Activated B cell treated with CpG ODN at 0.5 μM for 24 hours (primary cell): ENCODE measurements at regions of chr6 and their contacts with region 1.

Region 1: DNA sequence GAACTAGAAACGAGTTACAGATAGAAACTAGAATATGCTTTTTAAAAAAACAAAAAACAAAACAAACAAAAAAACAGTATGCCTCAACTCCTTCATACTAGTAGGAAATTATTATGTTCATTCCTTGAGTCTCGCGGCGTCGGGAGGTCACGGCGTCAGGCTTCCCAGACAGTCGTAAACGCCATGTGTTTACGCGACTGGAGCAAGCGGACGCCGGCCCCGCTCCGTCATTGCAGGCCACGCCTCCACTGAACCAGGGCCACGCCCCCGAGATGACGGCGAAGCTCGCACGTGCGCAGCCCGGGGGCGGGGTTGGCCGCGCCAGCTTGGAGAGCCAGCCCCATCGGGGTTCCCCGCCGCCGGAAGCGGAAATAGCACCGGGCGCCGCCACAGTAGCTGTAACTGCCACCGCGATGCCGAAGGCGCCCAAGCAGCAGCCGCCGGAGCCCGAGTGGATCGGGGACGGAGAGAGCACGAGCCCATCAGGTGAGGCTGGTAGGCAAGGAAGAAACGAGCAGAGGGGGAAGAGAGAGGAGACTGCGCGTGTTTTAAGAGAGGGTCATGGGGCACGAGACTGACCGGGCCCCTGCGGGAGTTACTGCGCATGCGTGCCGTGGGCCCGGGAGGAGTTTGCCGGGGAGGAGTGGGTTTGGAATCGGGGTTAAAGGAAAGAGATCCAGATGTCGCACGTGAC is at the start of gene ABCF1:
- DNase-seq: peak; percentile 100
- ATAC-seq: peak; percentile 95
- H3K4me3 Mint-ChIP-seq: peak within 1 kb of the TSS; percentile 99
- H3K27ac Mint-ChIP-seq: peak within 1 kb of the TSS; percentile 96
- H3K4me1 Mint-ChIP-seq: peaks cover 53% of the 10 kb centered on the region
- H3K27me3 Mint-ChIP-seq: no peaks in the 10 kb centered on the region
- CTCF ChIP-seq: no peak
- total RNA-seq, gene ABCF1: 93.7 and 94.5 TPM in 2 replicates

Region 2: DNA sequence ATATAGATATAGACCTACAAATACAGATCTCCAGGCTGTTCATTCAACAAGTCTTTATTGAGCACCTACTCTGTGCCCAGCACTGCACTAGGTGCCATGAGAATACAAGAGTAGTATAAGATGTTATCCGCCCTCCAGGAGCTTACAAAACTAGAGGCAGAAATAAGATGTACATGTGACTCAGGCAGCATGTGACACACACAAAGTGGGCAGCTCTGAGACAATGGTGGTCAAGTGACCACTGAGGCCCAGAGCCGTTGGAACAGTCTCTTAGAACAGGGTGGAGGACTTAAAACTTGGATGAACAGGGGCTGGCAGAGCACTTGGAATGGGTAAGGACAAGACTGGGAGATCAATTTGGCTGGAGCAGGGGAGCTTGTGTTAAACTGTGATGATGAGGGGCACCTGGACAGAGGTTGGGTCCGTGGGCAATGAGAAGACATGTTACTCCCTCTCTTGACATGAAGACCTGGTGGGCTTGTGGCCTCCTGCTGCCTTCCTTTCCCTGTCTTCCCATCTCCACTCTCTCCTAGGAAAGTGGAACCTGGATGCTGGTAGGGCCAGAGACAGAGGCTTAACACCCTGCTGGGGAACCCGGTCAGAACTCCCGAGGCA is 386.7 kb before region 1 on chr6:
- CTCF ChIA-PET with region 1: no interaction called
- POLR2A ChIA-PET with region 1: no interaction called
- intact Hi-C with region 1: no loop called
- DNase-seq: no peak
- ATAC-seq: no peak
- H3K4me3 Mint-ChIP-seq: no peak overlapping the region
- H3K27ac Mint-ChIP-seq: no peak overlapping the region
- H3K4me1 Mint-ChIP-seq: no peaks in the 10 kb centered on the region
- H3K27me3 Mint-ChIP-seq: no peaks in the 10 kb centered on the region
- CTCF ChIP-seq: no peak

Region 3: DNA sequence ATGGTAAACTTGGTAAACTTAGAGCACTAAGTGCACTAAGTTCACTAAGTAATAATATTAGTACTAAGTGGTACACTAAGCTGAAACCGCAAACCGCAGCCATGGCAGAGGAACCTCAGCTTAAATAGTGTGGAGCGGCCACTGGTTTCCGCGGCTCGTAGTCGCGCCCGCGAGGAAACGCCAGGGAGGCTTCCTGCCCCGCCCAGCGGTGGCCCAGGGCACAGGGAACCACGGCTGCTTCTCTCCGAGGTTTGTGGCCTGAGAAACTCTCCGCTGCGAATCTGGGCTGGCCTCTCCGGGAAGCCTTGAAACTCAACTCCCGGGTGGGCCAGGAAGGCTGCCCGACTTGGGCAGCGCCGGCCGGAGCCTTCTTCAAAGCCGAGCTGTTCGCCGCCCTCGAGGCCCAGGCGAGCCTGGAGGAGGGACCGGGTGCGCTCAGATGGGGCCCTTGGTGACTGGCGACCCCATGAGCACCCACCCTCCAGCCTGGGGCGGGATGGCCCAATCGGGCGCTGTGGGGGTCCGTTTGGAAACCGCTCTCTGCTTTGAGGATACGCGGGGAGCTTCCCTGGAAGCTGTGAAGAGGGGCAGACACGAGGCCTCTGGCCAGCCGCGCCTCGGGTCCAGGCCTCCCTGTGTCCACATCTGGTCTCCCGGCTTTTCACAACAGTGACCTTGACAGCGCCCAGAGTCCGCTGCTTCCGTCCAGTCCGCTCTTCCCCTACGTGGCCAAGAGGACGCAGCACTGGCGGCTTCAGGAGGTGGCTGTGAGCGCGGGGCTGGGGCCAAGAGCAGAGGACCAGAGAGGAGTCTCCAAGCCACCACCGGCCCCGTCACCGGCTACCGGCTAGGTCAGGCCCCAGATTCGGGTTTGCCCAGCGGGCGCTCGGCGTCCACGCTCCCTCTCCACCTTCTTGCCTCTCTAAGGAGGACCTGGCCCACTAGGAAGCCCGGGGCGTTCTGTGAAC is 107.3 kb before region 1 on chr6:
- CTCF ChIA-PET with region 1: no interaction called
- POLR2A ChIA-PET with region 1: interaction called, 22 read pairs
- intact Hi-C with region 1: no loop called
- DNase-seq: peak; percentile 46
- ATAC-seq: peak; percentile 48
- H3K4me3 Mint-ChIP-seq: peak overlapping the region; percentile 58
- H3K27ac Mint-ChIP-seq: no peak overlapping the region
- H3K4me1 Mint-ChIP-seq: peaks cover 37% of the 10 kb centered on the region
- H3K27me3 Mint-ChIP-seq: peaks cover 68% of the 10 kb centered on the region
- CTCF ChIP-seq: no peak

Region 4: GRCh38 chr6:30508890-30509736 is 62.1 kb before region 1 on chr6:
- CTCF ChIA-PET with region 1: no interaction called
- POLR2A ChIA-PET with region 1: interaction called, 11 read pairs
- intact Hi-C with region 1: no loop called
- DNase-seq: no peak
- ATAC-seq: peak; percentile 55
- H3K4me3 Mint-ChIP-seq: peak overlapping the region; percentile 75
- H3K27ac Mint-ChIP-seq: peak overlapping the region; percentile 90
- H3K4me1 Mint-ChIP-seq: peaks cover 73% of the 10 kb centered on the region
- H3K27me3 Mint-ChIP-seq: no peaks in the 10 kb centered on the region
- CTCF ChIP-seq: no peak

Region 5: DNA sequence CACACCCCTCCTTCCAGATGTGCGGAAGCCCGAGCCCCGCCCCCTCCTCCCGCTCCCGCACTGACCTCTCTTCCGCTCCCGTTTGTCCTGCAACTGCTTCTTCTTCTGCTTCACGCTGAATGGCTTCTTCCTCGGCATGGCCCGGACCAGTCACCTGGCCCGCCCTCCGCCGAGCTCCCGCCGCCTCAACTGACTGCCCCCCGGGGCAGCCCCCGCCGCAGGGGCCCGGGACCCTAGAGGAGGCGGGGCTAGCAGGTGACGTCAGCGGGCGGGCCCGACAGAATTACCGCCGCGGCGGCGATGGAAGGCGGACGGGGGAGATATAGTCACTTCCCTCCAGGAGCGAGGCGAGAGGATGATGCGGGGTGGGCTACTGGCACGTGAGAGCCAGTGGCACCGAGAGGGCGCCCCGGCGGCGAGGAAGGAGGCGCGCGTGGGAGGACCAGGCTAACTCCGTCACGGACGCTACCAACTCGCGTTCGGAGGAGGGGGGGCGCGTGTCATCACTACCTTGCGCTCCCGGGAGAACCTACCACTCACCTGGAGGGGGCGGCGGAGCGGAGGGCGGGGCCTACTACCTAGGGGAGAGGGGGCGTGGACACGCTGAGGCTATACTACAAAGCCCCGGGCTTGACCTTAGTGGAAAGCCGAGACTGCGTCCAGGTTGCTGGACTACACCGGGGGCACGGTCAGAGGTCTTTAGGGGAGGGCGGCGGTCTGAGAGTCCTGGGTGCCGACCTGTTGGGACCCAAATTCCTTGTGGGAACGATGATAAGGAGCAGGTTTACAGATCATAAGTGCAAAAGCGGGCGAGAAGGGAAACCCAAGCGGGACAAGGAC is 14.9 kb before region 1 on chr6 and contains the start of gene GNL1:
- CTCF ChIA-PET with region 1: interaction called, 4 read pairs
- POLR2A ChIA-PET with region 1: interaction called, 63 read pairs
- intact Hi-C with region 1: loop called (anchors 1 kb)
- DNase-seq: peak; percentile 99
- ATAC-seq: peak; percentile 89
- H3K4me3 Mint-ChIP-seq: peak within 1 kb of the TSS; percentile 94
- H3K27ac Mint-ChIP-seq: peak within 1 kb of the TSS; percentile 97
- H3K4me1 Mint-ChIP-seq: peaks cover 40% of the 10 kb centered on the region
- H3K27me3 Mint-ChIP-seq: no peaks in the 10 kb centered on the region
- CTCF ChIP-seq: no peak
- total RNA-seq, gene GNL1: 67.2 and 67.4 TPM in 2 replicates